Head of caudate nucleus (tissue), 42 donors: ENCODE measurements at regions of chr15 and their contacts with region 1.

Region 1: DNA sequence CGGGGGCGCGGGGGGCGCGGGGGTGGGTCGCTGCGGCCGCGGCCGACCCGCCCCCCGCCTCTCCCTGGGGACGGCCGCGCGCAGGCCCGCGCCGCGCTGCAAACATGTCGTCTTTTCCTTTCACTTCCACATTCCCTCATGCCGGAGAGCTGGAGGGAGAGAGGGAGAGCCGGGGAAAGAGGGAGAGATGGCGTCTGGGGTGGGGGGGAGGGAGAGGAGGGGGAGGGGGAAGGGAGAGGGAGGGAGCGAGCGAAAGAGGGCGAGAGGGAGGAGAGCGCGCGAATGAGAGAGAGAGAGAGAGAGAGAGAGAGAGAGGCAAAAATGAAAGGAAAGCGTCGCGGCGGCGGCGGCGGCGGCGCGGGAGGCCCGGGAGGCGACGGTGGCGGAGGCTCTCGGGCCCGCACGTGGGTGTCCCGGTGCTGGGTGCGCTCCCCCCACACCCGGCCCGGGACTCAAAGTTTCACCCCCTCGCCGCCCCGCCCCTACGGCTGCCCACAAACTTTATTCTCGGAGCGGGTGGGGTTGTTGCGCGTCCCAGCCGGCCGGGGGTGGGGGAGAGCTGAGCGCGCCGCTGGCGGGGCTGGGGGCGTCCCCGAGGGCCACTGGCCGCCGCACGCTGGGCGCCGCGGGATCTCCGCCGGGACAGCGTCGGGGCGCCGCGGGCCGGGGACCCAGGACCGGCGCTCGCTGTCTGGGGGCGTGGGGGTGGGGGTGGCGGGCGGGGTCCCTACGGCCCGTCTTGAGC is 731 bp downstream of the ZNF710 start:
- DNase-seq: peak in 38 of 42 donors; percentile 34 to 80 (median 63)

Region 2: GRCh38 chr15:89893696-89894455 is 108.0 kb before region 1 on chr15 and contains the start of gene AP3S2:
- intact Hi-C with region 1: loop called (anchors 10 kb)
- DNase-seq: peak; percentile 76 to 97 (median 92)

Region 3: GRCh38 chr15:89964232-89964954 is 37.5 kb before region 1 on chr15:
- intact Hi-C with region 1: no loop called
- DNase-seq: peak in 9 of 42 donors; percentile 15 to 58 (median 37)

Region 4: GRCh38 chr15:90062023-90062442 is 60.2 kb after region 1 on chr15:
- intact Hi-C with region 1: loop called (anchors 10 kb)
- DNase-seq: peak in 18 of 42 donors; percentile 37 to 74 (median 52)

Region 5: DNA sequence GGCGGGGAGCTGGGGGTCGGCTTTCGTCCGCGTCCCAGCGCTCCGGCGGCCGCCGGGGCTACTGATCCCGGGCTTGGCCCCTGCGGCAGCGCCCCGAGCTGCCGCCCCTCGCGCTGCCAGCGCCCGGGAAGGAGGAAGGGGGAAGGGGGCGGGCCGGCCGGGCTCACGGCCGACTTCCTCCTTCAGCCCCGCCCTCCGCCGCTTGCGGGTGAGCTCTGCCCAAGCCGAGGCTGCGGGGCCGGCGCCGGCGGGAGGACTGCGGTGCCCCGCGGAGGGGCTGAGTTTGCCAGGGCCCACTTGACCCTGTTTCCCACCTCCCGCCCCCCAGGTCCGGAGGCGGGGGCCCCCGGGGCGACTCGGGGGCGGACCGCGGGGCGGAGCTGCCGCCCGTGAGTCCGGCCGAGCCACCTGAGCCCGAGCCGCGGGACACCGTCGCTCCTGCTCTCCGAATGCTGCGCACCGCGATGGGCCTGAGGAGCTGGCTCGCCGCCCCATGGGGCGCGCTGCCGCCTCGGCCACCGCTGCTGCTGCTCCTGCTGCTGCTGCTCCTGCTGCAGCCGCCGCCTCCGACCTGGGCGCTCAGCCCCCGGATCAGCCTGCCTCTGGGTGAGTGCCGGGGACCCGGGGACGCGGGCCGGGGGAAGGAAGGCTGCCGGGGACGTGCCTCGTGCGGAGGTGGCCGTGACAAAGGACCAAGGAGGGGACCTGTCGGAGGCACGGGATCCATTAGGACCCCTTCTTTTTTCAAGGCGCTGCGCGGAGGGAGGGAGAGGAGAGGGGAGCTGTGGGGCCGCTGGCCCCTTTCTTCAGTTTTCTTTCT is 199.5 kb after region 1 on chr15 and contains the start of gene SEMA4B:
- intact Hi-C with region 1: no loop called
- DNase-seq: peak in 41 of 42 donors; percentile 37 to 84 (median 71)

Region 6: GRCh38 chr15:90376789-90377188 is 374.9 kb after region 1 on chr15:
- intact Hi-C with region 1: no loop called
- DNase-seq: no peak